GM12878 (cell line): ENCODE measurements at regions of chr4 and their contacts with region 1.

Region 1: DNA sequence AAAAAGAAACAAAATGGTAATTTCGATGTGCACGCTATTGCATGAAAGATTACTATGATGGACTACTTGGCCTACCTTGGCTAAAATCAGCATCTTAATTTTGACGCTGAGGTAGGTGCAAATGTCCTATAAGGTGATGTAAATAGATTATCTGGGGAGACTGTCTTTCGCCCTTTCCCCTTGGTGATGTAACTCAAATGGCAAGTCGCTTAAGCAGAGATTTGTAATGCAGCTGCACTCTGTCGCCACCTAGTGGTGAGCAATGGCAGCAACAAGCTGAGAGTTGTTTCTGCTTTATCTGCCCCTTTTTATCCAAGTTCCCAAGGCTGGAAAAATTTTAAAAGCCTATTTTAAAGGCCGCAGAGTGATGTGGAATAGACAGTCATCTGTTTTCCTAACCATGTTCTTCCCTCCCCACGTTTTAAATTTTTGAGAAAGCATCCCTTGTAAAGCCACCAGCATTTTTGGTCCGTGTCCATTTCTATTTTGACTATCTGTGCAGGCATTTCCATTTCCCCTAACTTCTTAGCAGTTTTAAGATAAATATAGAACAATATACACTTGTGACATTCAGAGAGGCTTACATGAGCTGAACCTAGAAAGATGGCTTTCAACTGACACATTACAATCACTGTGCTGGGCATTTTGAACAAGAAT is 62.4 kb upstream of the PDLIM3 start:
- DNase-seq: peak; percentile 33
- ATAC-seq: peak; percentile 84
- H3K4me3 ChIP-seq: no peak overlapping the region
- H3K27ac ChIP-seq: no peak overlapping the region
- H3K4me1 ChIP-seq: peaks cover 3% of the 10 kb centered on the region; the same call in 1 of the 2 replicates
- H3K27me3 ChIP-seq: no peaks in the 10 kb centered on the region
- CTCF ChIP-seq: peak; percentile 95 to 99 (median 99); a peak in 5 of 6 replicates
- EP300 ChIP-seq: no peak
- POLR2A ChIP-seq: no peak
- RAD21 ChIP-seq: peak; percentile 98

Region 2: DNA sequence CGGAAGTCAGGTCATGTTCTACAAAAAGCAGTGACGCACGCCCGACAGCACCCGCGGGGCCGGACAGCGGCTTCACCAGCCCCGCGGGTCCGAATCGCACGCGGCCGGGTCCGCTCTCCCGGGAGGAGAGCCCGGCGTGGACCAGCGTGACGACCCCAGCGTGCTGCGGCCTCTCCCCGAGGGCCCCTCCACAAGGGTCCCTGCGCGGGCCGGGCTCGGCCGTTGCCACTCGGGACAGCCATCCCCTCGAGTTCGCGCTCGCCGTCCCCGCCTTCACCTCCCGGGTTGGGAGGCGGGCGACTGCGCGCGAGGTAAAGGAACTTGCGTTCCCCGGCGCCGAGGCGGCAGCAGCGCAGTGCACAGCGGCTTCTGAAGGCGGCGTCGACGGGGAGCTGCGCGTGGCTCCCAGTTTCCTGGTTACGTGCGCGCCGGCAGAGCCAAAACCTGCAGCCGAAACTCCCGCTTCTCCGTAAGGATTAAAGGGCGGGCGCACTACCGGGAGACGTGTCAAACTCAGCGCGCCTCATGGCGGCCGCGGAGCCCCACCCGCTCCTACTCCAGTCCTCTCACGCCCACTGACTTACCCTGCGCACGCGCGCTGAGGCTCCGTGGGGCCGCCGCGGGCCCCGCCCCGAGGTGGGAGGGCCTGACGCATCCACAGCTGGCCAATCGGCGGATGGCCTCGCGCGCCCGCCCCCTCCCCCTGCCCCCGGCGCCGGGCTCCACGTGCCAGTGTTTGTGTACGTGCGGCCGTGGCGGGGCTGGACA is 201.5 kb before region 1 on chr4:
- CTCF ChIA-PET with region 1: interaction called, 8 read pairs
- POLR2A ChIA-PET with region 1: no interaction called
- RAD21 ChIA-PET with region 1: no interaction called
- SMC1A ChIA-PET with region 1: interaction called, 3 read pairs
- in situ Hi-C with region 1: no loop called
- intact Hi-C with region 1: loop called (anchors 5 kb)
- DNase-seq: peak; percentile 97
- ATAC-seq: peak; percentile 91
- H3K4me3 ChIP-seq: peak overlapping the region; percentile 79
- H3K27ac ChIP-seq: peak overlapping the region; percentile 97
- H3K4me1 ChIP-seq: peaks cover 19% of the 10 kb centered on the region
- H3K27me3 ChIP-seq: no peaks in the 10 kb centered on the region
- CTCF ChIP-seq: no peak
- EP300 ChIP-seq: 0 out of 4 replicates have a peak, but pooled peaks of 1 of the 2 experiments have one; percentile 55
- POLR2A ChIP-seq: peak; percentile 86
- RAD21 ChIP-seq: no peak

Region 3: DNA sequence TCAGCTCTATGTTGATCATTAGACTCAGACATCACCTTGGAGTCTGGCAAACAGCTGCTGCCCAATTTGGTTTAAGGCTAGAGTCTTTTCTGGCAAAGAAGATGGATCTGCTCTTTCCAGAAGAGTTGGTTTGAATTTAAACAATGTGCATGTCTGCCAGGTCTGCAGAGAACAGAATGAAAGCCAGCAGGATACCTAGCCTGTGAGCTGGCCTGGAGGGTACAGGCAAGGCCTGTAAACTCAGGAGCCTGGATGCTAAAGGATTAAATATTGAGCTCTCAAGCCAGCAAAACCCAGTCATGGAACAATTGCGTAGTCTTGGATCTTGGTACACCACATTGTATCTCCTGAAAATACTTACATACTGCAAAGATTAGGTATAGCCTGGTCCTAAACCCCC is 46.7 kb before region 1 on chr4:
- CTCF ChIA-PET with region 1: interaction called, 15 read pairs
- POLR2A ChIA-PET with region 1: no interaction called
- RAD21 ChIA-PET with region 1: no interaction called
- SMC1A ChIA-PET with region 1: interaction called, 7 read pairs
- in situ Hi-C with region 1: no loop called
- intact Hi-C with region 1: no loop called
- DNase-seq: no peak
- ATAC-seq: no peak
- H3K4me3 ChIP-seq: no peak overlapping the region
- H3K27ac ChIP-seq: no peak overlapping the region
- H3K4me1 ChIP-seq: no peaks in the 10 kb centered on the region
- H3K27me3 ChIP-seq: peaks cover 0 to 2% of the 10 kb centered on the region in 2 experiments; a peak in 1 of 4 replicates
- CTCF ChIP-seq: no peak
- EP300 ChIP-seq: no peak
- POLR2A ChIP-seq: no peak
- RAD21 ChIP-seq: no peak

Region 4: DNA sequence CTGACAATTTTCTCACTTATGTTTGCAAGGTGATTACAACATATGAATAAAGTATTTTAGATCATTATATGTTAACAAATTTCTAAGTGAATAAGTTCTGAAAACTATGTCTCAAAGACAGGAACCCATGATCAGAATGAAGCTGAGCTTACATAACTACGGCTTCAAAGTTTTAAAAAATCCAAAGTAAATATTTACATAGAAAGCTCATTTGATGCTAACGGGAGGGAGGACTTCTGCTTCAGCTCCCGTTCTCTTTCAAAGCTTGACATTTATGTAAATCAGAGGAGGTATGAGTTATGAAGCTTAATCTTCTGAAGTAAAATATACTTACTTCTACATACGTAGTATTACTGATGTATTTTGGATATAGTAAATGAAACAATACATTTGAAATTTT is 10.5 kb after region 1 on chr4:
- CTCF ChIA-PET with region 1: interaction called, 41 read pairs
- POLR2A ChIA-PET with region 1: no interaction called
- RAD21 ChIA-PET with region 1: interaction called, 4 read pairs
- SMC1A ChIA-PET with region 1: interaction called, 4 read pairs
- in situ Hi-C with region 1: no loop called
- intact Hi-C with region 1: no loop called
- DNase-seq: no peak
- ATAC-seq: no peak
- H3K4me3 ChIP-seq: no peak overlapping the region
- H3K27ac ChIP-seq: no peak overlapping the region
- H3K4me1 ChIP-seq: no peaks in the 10 kb centered on the region
- H3K27me3 ChIP-seq: no peaks in the 10 kb centered on the region
- CTCF ChIP-seq: no peak
- EP300 ChIP-seq: no peak
- POLR2A ChIP-seq: no peak
- RAD21 ChIP-seq: no peak